Activated CD8-positive, alpha-beta memory T cell treated with anti-CD3 and anti-CD28 coated beads, Interleukin-2, amount 10 ng/mL, durations not matched to agents 7 days and 5 days (primary cell): ENCODE measurements at regions of chr4 and their contacts with region 1.

Region 1: DNA sequence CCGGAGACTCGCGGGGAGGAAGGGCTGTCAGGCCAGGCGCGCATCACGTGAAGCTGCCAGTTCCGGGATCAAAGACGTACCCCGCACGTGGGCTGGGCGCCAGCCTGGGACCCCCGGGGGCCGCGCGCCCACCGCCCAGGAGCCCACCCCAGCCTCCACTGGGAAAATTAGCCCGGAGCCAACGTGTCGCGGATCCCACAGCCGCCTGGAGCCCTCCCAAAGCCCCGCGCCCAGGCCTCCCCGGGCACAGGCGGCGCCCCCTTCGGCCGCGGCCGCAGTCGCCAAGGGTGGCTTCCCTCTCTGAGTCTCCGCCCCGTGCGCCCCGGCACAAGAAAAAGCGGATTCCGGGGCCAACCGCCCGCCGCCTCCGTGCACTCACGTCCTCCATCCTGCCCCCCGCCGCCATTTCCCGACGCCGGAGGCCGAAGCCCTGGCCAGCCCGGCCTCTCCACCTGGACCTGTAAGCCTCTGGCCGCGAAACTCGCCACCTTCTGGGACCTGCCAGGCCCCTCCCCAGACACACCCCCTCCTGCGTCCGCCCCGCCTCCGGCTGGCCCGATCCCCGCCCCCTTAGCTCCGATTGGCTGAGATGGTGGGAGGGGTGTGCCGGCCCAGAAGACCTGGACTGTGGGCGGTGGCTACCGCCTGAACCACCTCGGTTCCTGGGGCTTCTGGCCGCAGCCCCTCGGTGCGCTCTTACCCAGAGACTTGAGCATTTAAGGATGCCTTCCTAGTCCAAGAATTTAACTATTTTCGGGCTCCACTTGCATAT is at the start of gene TMEM192:
- DNase-seq: peak; percentile 94
- ATAC-seq: peak; percentile 97
- H3K4me3 Mint-ChIP-seq: peak within 1 kb of the TSS; percentile 94
- H3K27ac Mint-ChIP-seq: peak within 1 kb of the TSS; percentile 92
- H3K4me1 Mint-ChIP-seq: peaks cover 24% of the 10 kb centered on the region
- H3K27me3 Mint-ChIP-seq: peaks cover 16% of the 10 kb centered on the region
- total RNA-seq, gene TMEM192: 6.4 to 7.3 TPM

Region 2: GRCh38 chr4:165096776-165097175 is 15.8 kb before region 1 on chr4:
- CTCF ChIA-PET with region 1: interaction called, 15 read pairs
- DNase-seq: no peak
- ATAC-seq: no peak
- H3K4me3 Mint-ChIP-seq: no peak overlapping the region
- H3K27ac Mint-ChIP-seq: no peak overlapping the region
- H3K4me1 Mint-ChIP-seq: no peaks in the 10 kb centered on the region
- H3K27me3 Mint-ChIP-seq: no peaks in the 10 kb centered on the region

Region 3: GRCh38 chr4:165124463-165124862 is 11.9 kb after region 1 on chr4:
- CTCF ChIA-PET with region 1: interaction called, 17 read pairs
- DNase-seq: no peak
- ATAC-seq: no peak
- H3K4me3 Mint-ChIP-seq: no peak overlapping the region
- H3K27ac Mint-ChIP-seq: no peak overlapping the region
- H3K4me1 Mint-ChIP-seq: no peaks in the 10 kb centered on the region
- H3K27me3 Mint-ChIP-seq: peaks cover 14% of the 10 kb centered on the region

Region 4: DNA sequence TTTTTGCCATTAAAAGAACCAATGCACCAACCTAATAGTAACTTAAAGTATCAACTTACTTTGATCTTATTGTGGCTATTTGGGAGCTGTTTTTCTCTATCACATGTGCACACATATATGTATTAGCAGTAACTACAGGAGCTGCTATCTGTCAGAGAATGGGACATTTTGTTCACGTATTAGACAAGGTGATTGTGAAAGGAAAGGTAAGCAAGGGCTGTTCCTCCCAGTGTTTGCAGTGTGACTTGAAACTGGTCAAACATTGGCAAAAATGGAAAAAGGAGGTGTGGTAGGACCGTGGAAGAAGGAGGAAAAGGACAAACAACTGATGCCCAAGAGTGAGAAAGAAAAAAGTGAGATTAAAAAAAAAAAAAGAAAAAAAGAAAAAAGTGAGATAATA is 51.7 kb after region 1 on chr4:
- CTCF ChIA-PET with region 1: no interaction called
- DNase-seq: no peak
- ATAC-seq: no peak
- H3K4me3 Mint-ChIP-seq: no peak overlapping the region
- H3K27ac Mint-ChIP-seq: no peak overlapping the region
- H3K4me1 Mint-ChIP-seq: no peaks in the 10 kb centered on the region
- H3K27me3 Mint-ChIP-seq: peaks cover 27% of the 10 kb centered on the region